MCF 10A (cell line): ENCODE measurements at regions of chr1 and their contacts with region 1.

Region 1: GRCh38 chr1:66242646-66243547 is 291.1 kb upstream of the SGIP1 start:
- DNase-seq: peak; percentile 87
- H3K4me3 Mint-ChIP-seq: no peak overlapping the region
- H3K27ac Mint-ChIP-seq: no peak overlapping the region
- H3K4me1 Mint-ChIP-seq: peaks cover 7% of the 10 kb centered on the region
- H3K27me3 Mint-ChIP-seq: peaks cover 11% of the 10 kb centered on the region
- CTCF ChIP-seq: peak; percentile 99

Region 2: DNA sequence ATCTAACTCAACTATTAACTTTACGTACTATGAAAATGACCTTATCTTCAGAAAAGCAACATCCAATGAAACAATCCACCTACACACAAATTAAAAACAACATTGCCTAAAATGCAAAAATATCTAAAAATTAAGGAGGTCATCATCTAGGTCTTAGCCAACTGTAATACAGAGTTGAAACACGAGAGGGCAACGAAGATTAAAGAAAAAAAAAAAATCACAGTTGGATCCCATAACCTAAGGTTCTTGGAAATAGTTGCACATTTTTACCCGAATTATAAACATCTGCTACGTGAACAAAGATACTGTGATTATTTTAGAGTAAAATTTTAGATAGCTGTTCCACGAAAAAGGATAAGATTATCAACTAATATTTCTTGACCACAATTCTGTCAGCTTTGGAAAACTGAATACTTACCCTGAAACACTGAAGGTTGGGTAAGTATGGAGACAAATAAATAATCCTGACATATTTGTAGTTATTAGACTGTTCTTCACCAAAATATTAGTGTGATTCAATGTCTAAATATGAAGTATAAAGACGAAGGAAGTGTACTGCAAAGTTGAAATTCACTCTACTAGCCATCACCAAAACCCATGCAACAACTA is 1182.9 kb before region 1 on chr1:
- CTCF ChIA-PET with region 1: no interaction called
- POLR2A ChIA-PET with region 1: no interaction called
- intact Hi-C with region 1: loop called (anchors 5 kb)
- DNase-seq: peak; percentile 54
- H3K4me3 Mint-ChIP-seq: no peak overlapping the region
- H3K27ac Mint-ChIP-seq: no peak overlapping the region
- H3K4me1 Mint-ChIP-seq: peaks cover 27% of the 10 kb centered on the region
- H3K27me3 Mint-ChIP-seq: no peaks in the 10 kb centered on the region
- CTCF ChIP-seq: peak; percentile 63

Region 3: DNA sequence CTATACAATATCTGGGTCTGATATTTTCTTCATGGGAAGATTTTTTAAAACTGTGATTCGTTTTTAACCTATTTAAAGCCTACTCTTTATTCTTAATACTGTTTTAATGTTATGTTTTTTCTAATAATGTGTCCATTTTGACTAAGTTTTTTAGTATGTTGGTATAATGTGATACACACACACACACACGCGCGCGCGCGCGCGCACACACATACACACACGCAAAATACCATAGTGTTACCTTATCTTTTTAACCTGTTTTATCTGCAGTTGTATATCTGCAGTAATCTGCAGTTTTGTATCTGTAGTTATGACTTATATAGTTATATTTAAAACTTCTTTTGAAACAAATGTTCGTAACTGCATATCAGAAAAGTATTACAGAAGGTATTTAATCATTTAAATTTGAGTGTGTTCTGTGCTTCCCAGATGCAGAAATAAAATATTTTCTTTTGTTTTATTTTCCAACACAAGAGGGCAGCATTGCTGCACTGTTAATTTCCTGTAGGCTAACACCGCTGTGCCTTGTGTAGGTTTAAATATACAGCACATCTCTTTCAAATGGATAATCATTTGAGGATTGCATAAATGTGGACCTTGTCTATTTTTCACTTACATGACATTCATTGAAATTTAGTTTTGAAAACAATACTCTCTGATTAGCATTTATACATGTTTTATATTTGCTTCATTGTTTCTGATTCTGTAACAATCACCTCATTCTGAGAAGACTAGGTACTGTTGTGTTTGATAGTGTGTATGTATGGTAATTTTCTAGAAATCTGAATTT is 284.1 kb before region 1 on chr1:
- CTCF ChIA-PET with region 1: interaction called, 280 read pairs
- POLR2A ChIA-PET with region 1: interaction called, 3 read pairs
- intact Hi-C with region 1: loop called (anchors 1 kb)
- DNase-seq: peak; percentile 62
- H3K4me3 Mint-ChIP-seq: no peak overlapping the region
- H3K27ac Mint-ChIP-seq: no peak overlapping the region
- H3K4me1 Mint-ChIP-seq: no peaks in the 10 kb centered on the region
- H3K27me3 Mint-ChIP-seq: no peaks in the 10 kb centered on the region
- CTCF ChIP-seq: peak; percentile 60

Region 4: DNA sequence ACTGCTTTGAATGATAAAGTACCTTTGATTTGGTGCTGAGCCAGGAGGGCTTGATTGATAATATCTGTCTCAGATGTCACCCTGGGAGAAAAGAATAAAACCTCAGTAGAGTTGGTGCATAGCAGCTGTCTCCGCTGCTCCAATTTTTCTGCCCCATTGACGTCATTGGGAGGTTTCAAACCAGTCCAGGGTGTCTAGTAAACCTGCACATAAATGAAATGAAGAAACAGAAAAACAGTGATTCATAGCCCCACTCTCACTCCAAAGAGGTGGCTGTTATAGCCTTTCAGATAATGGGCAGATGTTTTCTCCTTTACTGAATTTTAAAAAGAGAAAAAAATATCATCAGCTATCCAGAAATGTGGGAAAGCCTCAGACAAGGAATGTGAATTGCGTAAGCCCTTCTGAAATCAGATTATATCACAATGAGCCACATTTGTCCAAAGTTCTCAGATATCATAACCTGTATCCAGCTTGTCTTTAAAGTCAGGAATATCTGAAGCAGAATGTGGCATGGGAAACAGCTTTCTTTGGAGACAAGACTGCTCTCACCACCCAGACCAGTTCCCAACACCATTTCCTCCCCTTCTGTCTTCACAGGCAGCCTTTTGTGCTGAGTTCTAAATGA is 60.2 kb before region 1 on chr1:
- CTCF ChIA-PET with region 1: interaction called, 29 read pairs
- POLR2A ChIA-PET with region 1: no interaction called
- intact Hi-C with region 1: no loop called
- DNase-seq: peak; percentile 79
- H3K4me3 Mint-ChIP-seq: no peak overlapping the region
- H3K27ac Mint-ChIP-seq: peak overlapping the region; percentile 64
- H3K4me1 Mint-ChIP-seq: peaks cover 6% of the 10 kb centered on the region
- H3K27me3 Mint-ChIP-seq: no peaks in the 10 kb centered on the region
- CTCF ChIP-seq: no peak

Region 5: DNA sequence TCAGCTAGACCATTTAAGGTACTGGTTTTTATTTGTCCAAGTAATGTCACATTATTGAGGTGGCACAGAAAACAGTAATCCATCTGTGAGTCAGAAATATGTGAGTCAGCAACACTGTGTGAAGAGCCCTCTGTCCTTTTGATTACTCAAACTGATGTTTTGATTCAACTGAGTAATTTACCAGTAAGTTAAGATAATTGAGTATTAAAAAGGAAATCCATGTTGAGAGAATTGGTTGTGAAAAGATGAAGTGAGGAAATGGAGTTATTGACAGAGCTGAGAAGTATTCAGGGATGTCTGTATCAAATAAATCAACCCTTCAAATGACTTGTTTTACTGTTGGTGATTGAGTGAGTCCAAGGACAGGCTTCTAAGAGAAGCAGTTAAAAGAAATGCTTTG is 11.7 kb before region 1 on chr1:
- CTCF ChIA-PET with region 1: interaction called, 57 read pairs
- POLR2A ChIA-PET with region 1: interaction called, 3 read pairs
- intact Hi-C with region 1: no loop called
- DNase-seq: peak; percentile 50
- H3K4me3 Mint-ChIP-seq: no peak overlapping the region
- H3K27ac Mint-ChIP-seq: no peak overlapping the region
- H3K4me1 Mint-ChIP-seq: peaks cover 6% of the 10 kb centered on the region
- H3K27me3 Mint-ChIP-seq: peaks cover 15% of the 10 kb centered on the region
- CTCF ChIP-seq: no peak

Region 6: GRCh38 chr1:66446261-66447001 is 203.5 kb after region 1 on chr1:
- CTCF ChIA-PET with region 1: interaction called, 687 read pairs
- POLR2A ChIA-PET with region 1: interaction called, 3 read pairs
- intact Hi-C with region 1: loop called (anchors 1 kb)
- DNase-seq: peak; percentile 68
- H3K4me3 Mint-ChIP-seq: no peak overlapping the region
- H3K27ac Mint-ChIP-seq: no peak overlapping the region
- H3K4me1 Mint-ChIP-seq: no peaks in the 10 kb centered on the region
- H3K27me3 Mint-ChIP-seq: no peaks in the 10 kb centered on the region
- CTCF ChIP-seq: peak; percentile 75

Region 7: DNA sequence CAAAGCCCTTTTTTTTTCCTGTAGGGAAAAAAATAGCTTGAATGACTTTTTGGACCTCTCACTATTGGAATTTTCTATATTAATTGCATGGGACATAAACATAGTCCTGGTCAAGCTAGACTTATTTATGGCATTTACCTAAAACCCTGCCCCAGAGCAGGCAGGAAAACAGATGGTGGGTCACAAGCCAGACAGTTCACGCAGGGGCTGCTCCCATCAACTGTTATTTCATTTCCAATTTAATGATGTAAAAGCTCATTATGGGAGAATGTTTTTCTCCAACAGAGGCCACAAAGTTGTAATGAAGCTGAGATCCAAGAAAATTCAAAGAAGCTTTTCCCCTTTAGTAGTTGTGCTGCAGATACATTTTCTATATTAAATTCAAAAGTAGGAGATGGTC is 390.3 kb after region 1 on chr1:
- CTCF ChIA-PET with region 1: no interaction called
- POLR2A ChIA-PET with region 1: no interaction called
- intact Hi-C with region 1: no loop called
- DNase-seq: no peak
- H3K4me3 Mint-ChIP-seq: no peak overlapping the region
- H3K27ac Mint-ChIP-seq: no peak overlapping the region
- H3K4me1 Mint-ChIP-seq: no peaks in the 10 kb centered on the region
- H3K27me3 Mint-ChIP-seq: no peaks in the 10 kb centered on the region
- CTCF ChIP-seq: no peak